Thyroid gland (tissue), 4 donors: ENCODE measurements at regions of chr22 and their contacts with region 1.

Region 1: GRCh38 chr22:37904572-37905533 is 1.2 kb upstream of the MICALL1 start:
- DNase-seq: peak in 1 of 2 donors; percentile 22
- H3K4me3 ChIP-seq: peak overlapping the region in 1 of 3 donors; percentile 69
- H3K27ac ChIP-seq: peak overlapping the region; percentile 18 to 69 (median 65)
- H3K4me1 ChIP-seq: peaks cover 14 to 21% of the 10 kb centered on the region in 2 donors
- H3K27me3 ChIP-seq: no peaks in the 10 kb centered on the region
- CTCF ChIP-seq: no peak
- POLR2A ChIP-seq: no peak

Region 2: DNA sequence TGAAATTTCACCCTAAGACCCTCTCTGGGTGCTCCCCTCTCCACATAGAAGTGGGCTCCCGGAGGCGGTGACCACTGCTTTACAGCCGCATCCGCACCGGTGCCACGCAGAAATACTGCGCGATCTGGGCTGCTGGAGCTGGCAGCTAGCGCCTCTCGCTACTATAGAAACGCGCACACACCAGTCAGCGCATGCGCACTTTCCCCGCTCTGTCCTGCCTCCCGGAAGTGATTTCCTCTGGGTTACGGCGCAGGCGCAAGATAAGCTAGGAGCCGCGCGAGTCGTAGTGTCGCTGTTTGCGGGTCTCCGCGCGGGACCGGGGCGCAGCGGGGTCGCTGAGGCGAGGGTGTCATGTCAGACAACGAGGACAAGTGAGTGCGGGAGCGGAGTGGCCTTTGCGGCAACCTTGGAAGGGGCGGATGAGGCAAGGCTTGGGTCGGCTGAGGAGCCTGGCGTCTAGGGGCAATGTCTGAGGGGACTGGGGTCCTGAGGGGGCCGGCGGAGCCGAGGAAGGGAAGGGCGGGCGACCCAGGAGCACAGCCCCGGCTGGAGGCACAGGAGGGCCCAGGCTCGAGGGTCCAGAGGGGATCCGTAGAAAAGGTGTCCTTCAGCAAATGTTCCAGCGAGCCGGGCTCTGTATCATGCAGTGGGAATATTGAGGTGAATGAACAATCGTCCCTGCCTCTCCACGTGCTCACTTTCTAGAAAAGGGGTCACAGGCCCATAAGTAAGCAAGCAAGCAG is 48.8 kb after region 1 on chr22 and contains the starts of genes C22orf23 and POLR2F:
- intact Hi-C with region 1: loop called (anchors 5 kb)
- DNase-seq: peak; percentile 95 to 97
- H3K4me3 ChIP-seq: peak within 1 kb of the TSS; percentile 61 to 78 (median 69)
- H3K27ac ChIP-seq: peak within 1 kb of the TSS in 2 of 3 donors; percentile 25 to 57
- H3K4me1 ChIP-seq: peaks cover 15 to 20% of the 10 kb centered on the region in 2 donors
- H3K27me3 ChIP-seq: no peaks in the 10 kb centered on the region
- CTCF ChIP-seq: no peak
- POLR2A ChIP-seq: peak in 1 of 2 donors; percentile 85
- total RNA-seq, gene C22orf23: 0.59 to 1.7 (median 0.73) TPM
- total RNA-seq, gene POLR2F: 19.7 to 88.9 (median 55.2) TPM

Region 3: GRCh38 chr22:38017272-38017920 is 112.5 kb after region 1 on chr22:
- intact Hi-C with region 1: no loop called
- DNase-seq: peak; percentile 89 to 91
- H3K4me3 ChIP-seq: no peak overlapping the region
- H3K27ac ChIP-seq: peak overlapping the region; percentile 62 to 81 (median 70)
- H3K4me1 ChIP-seq: peaks cover 15 to 22% of the 10 kb centered on the region in 2 donors
- H3K27me3 ChIP-seq: no peaks in the 10 kb centered on the region
- CTCF ChIP-seq: no peak
- POLR2A ChIP-seq: no peak

Region 4: DNA sequence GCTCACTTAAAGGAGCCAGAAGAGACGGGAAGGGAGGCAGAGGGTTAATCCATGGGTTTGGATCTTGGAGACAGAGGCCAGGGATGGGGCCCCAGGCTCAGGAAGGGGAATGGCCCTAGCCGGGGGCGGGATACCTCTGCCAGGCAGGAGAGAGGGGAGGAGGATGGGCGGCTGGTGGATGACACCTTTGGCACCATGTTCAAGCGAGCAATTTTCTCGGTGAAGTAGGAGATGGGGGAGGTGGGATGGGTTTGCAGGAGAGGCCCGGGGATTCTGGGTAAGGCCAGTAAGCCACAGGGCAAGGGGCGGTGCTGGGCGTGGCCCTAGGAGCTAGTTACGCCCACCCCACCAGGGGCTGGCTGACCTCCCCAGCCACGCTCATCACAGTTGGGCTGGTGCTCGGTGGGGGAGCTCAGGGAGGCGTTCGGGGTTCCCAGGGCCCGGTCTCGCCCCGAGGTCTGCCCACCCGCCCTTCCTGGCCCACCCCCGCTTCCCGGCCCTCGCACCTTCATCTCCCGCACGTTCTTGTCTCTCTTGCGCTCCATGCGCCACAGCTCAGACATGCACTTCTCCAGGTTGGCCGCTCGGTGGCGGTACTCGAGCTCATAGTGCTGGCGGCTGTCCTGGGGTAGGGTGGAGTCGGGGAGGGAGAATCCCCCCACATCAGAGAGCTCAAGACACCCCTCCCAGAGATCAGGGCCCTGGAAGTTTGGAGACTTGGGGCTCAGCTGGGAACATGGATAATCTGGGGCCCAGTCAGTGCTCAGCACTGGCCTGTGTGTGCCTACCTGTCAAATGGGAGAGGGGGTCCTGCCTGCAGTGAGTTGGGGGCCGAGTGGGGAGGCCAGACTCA is 192.9 kb after region 1 on chr22:
- intact Hi-C with region 1: no loop called
- DNase-seq: no peak
- H3K4me3 ChIP-seq: no peak overlapping the region
- H3K27ac ChIP-seq: no peak overlapping the region
- H3K4me1 ChIP-seq: no peaks in the 10 kb centered on the region
- H3K27me3 ChIP-seq: no peaks in the 10 kb centered on the region
- CTCF ChIP-seq: peak in 1 of 6 experiments; percentile 33
- POLR2A ChIP-seq: no peak